ENCODE measurements at regions of chr3 and their contacts with region 1.

Region 1: GRCh38 chr3:45516829-45517228 is 77.7 kb upstream of the LIMD1 start:
- DNase-seq: no peak
- ATAC-seq: peak in 1 of 4 donors; percentile 23
- H3K4me3 ChIP-seq: no peak overlapping the region
- H3K27ac ChIP-seq: no peak overlapping the region
- H3K4me1 ChIP-seq: no peaks in the 10 kb centered on the region
- H3K27me3 ChIP-seq: no peaks in the 10 kb centered on the region
- CTCF ChIP-seq: no peak

Region 2: GRCh38 chr3:45593708-45594609 is 77.1 kb after region 1 on chr3:
- intact Hi-C with region 1: loop called in 1 of 3 experiments (anchors 10 kb)
- DNase-seq: peak; percentile 69 to 89 (median 78)
- ATAC-seq: peak; percentile 77 to 90 (median 86)
- H3K4me3 ChIP-seq: peak overlapping the region; percentile 62 to 83 (median 69)
- H3K27ac ChIP-seq: peak overlapping the region; percentile 75 to 92 (median 83)
- H3K4me1 ChIP-seq: peaks cover 15 to 34% (median 24%) of the 10 kb centered on the region in 3 donors
- H3K27me3 ChIP-seq: no peaks in the 10 kb centered on the region
- CTCF ChIP-seq: no peak

Region 3: GRCh38 chr3:45612918-45613602 is 96.2 kb after region 1 on chr3:
- intact Hi-C with region 1: no loop called
- DNase-seq: no peak
- ATAC-seq: peak in 3 of 4 donors; percentile 4 to 11 (median 5)
- H3K4me3 ChIP-seq: no peak overlapping the region
- H3K27ac ChIP-seq: peak overlapping the region in 3 of 4 donors; percentile 46 to 63 (median 60)
- H3K4me1 ChIP-seq: peaks cover 34 to 54% (median 50%) of the 10 kb centered on the region in 3 donors
- H3K27me3 ChIP-seq: no peaks in the 10 kb centered on the region
- CTCF ChIP-seq: no peak